ENCODE measurements at regions of chr11 and their contacts with region 1.

Region 1: GRCh38 chr11:22730319-22730718 is 63.9 kb downstream of the GAS2 start:
- DNase-seq: no peak
- ATAC-seq: no peak

Region 2: DNA sequence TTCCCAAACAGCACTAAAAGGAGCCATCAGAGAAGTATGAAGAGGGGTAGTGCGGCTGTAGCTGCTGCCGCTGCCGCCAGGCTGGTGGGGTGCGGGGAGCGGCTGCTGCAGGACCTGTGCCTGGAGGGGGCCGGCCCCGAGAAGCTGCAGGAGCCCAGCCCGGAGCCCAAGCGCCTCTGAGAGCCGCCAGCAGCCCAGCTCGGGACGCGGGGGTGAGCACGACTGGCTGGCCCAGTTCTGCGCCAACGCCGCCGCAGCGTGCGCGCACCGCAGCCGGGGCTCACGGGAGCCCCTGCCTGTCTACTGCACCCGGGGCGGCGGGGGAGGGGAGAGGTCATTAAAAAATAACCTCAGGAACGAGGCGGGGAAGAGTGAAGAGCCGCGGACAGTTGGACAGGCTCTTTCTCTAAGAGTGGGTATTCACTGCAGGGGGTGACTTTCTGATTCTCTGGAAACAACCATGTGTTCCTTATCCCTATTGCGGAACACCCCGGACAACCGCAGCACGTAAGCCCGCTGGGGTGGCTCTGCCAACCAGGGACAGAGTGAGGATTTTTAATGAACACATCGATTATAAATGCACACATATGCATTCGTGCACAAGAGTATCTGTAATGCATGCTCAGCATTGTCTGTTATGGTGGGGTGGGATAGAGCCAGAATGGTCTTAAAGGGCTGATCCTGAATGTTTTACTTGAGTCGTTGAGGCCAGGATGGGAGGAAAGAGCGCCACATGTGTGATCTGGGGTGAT is 63.5 kb before region 1 on chr11:
- intact Hi-C with region 1: loop called (anchors 2 kb)
- DNase-seq: peak; percentile 73
- ATAC-seq: peak; percentile 89

Region 3: DNA sequence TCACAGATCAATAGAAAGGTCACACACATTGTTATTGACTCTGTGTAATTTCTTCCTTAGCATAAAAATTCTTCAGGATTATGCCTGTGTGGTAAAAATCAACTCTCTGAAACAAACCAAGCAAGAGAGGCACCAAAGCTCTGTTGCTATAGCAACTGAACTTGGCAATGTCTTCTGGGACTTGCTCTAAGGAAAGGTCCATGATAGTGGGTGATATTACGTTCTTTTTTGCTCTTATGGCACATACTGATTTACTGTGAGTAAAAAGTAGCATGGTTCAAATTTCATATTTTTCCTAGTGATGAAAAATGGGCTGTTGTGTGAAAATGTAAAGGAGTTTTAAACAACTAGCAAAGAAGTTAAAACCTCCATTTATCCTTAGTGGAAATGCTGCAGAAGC is 32.8 kb after region 1 on chr11:
- intact Hi-C with region 1: no loop called
- DNase-seq: no peak
- ATAC-seq: no peak